ENCODE measurements at regions of chr17 and their contacts with region 1.

Region 1: DNA sequence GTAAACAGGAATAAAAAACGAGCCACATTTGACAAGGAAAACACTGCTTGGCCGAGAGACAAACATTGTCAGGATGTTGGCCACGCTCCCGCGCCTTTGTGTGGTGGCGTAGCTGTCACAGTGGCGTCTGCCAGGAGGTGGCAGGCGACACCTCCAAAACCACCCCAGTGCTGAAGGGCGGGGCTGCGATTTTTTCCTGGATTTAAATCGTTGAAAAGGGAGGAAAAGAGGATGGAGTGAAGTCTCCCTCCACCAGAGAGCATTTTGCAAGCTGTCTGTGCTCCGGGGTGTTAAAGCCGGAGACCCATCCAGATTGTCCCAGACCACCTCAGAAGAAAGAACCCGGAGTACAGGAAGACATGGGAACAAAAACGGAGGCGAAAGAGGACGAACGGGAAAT is 12.7 kb downstream of the MRM3 start:
- DNase-seq: no peak
- ATAC-seq: peak; percentile 58
- H3K4me3 Mint-ChIP-seq: no peak overlapping the region
- H3K27ac Mint-ChIP-seq: no peak overlapping the region
- H3K4me1 Mint-ChIP-seq: peaks cover 7% of the 10 kb centered on the region
- H3K27me3 Mint-ChIP-seq: no peaks in the 10 kb centered on the region
- CTCF ChIP-seq: no peak

Region 2: DNA sequence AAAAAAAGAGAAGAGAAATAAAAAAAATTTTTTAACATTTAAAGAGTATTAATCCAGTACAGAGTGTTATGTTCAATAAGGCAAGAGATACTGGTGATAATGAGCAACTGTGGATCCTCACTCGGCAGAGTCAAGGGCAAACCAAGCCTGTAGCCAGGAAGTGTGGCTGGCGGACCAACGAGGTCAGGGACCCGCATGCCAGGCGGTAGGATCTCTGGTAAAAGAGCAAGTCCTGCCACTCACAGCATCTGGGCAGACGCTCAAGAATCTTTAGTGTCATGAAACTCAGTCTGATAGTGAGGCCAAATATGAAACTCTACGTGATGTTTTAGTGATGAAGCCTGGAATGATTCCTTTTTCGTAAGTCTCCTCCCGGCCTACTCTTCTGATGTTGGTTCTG is 34.5 kb before region 1 on chr17:
- CTCF ChIA-PET with region 1: no interaction called
- POLR2A ChIA-PET with region 1: no interaction called
- intact Hi-C with region 1: no loop called
- DNase-seq: no peak
- ATAC-seq: no peak
- H3K4me3 Mint-ChIP-seq: no peak overlapping the region
- H3K27ac Mint-ChIP-seq: no peak overlapping the region
- H3K4me1 Mint-ChIP-seq: no peaks in the 10 kb centered on the region
- H3K27me3 Mint-ChIP-seq: no peaks in the 10 kb centered on the region
- CTCF ChIP-seq: no peak

Region 3: DNA sequence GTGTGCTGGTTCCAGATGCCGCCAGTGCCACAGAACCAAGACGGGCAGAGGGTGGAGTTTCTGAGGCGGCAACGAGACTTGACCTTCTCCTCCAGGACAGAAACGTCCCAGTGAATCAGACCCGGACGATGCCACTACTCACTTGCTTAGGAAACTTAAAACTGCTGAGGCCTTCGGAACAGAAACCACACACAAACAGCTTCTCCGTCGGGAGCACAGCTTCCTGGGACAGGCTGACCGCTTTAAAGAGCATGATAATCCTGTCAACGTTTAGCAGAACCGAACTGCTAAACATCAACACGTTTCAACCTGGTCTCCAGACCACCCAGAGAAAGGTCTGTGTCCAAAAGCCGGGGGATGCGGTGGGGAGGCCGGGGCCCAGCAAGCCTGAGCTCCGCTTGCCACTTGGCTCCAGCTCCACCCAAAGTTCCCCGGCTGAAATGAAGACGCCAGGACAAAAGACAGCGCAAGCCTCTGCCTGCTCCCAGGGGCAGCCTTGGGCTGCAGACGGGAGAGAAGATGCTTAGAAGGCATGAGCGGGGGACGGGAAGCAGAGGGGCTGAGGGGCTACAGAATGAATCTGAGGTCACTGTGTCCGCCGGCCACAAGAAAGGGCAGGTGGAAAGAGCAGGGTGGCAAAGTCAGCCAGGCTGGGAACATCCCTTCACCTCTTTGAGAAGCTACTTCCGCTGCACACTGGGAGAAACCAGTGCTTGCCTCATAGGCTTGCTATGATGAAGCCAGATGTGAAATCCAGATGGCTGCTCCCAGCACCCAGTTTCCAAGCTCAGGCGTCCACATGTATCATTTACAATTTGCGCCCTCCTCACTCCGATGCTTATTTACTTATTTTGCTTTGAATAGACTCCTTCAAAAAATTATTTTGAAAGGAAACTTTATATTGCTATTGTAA is 56.2 kb after region 1 on chr17:
- CTCF ChIA-PET with region 1: no interaction called
- POLR2A ChIA-PET with region 1: no interaction called
- intact Hi-C with region 1: no loop called
- DNase-seq: no peak
- ATAC-seq: no peak
- H3K4me3 Mint-ChIP-seq: no peak overlapping the region
- H3K27ac Mint-ChIP-seq: no peak overlapping the region
- H3K4me1 Mint-ChIP-seq: peaks cover 7% of the 10 kb centered on the region
- H3K27me3 Mint-ChIP-seq: peaks cover 19% of the 10 kb centered on the region
- CTCF ChIP-seq: no peak

Region 4: DNA sequence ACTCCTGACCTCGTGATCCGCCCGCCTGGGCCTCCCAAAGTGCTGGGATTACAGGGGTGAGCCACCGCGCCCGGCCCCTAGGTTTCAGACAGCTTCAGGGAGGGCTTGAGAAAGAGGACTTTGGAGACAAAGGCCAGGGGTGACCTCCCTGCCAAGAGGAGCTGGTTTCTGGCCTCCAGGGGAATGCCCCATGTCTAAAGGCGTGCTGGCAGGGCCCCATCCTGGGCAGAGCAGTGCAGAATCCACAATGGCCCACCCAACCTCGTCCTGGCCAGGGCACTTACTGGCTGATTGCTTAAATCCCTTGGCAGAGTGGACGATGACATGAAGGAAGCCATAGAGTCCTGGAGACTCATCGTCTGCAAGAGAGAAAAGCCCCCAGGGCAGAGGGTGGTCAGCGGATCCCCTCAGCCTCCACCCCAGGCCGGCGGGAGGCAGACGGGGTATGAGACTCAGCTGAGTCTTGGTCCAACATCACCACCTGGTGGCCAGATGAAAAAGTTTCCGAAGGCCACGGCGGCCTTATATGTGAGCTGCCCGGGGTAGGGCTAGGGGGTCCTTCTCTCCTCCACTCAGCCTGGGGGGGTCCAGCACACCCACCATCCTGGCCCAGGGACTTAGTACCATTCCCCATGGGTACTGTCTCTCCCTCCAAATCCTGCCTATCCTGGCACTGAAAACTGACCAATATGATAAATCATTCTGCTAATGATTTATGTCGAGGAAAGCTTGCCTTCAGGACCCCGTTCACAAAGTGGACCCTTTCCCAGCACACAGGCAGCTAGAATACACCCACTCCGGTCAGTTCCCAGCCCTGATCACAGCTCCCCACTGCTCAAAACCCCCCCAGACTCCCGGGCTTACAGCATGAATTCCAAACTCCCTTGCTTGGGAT is 261.1 kb after region 1 on chr17:
- CTCF ChIA-PET with region 1: interaction called, 4 read pairs
- POLR2A ChIA-PET with region 1: no interaction called
- intact Hi-C with region 1: loop called (anchors 1 kb)
- DNase-seq: peak; percentile 30
- ATAC-seq: peak; percentile 64
- H3K4me3 Mint-ChIP-seq: no peak overlapping the region
- H3K27ac Mint-ChIP-seq: no peak overlapping the region
- H3K4me1 Mint-ChIP-seq: peaks cover 2% of the 10 kb centered on the region
- H3K27me3 Mint-ChIP-seq: no peaks in the 10 kb centered on the region
- CTCF ChIP-seq: peak; percentile 33

Region 5: GRCh38 chr17:2054512-2055291 is 1259.8 kb after region 1 on chr17 and contains the start of gene HIC1:
- CTCF ChIA-PET with region 1: no interaction called
- POLR2A ChIA-PET with region 1: no interaction called
- intact Hi-C with region 1: no loop called
- DNase-seq: peak; percentile 85
- ATAC-seq: peak; percentile 39
- H3K4me3 Mint-ChIP-seq: peak within 1 kb of the TSS; percentile 69
- H3K27ac Mint-ChIP-seq: no peak within 1 kb of the TSS
- H3K4me1 Mint-ChIP-seq: peaks cover 36% of the 10 kb centered on the region
- H3K27me3 Mint-ChIP-seq: peaks cover 11% of the 10 kb centered on the region
- CTCF ChIP-seq: peak; percentile 71
- total RNA-seq, gene HIC1: 8.3 and 9.3 TPM in 2 replicates